BJ (cell line): ENCODE measurements at regions of chr1 and their contacts with region 1.

Region 1: DNA sequence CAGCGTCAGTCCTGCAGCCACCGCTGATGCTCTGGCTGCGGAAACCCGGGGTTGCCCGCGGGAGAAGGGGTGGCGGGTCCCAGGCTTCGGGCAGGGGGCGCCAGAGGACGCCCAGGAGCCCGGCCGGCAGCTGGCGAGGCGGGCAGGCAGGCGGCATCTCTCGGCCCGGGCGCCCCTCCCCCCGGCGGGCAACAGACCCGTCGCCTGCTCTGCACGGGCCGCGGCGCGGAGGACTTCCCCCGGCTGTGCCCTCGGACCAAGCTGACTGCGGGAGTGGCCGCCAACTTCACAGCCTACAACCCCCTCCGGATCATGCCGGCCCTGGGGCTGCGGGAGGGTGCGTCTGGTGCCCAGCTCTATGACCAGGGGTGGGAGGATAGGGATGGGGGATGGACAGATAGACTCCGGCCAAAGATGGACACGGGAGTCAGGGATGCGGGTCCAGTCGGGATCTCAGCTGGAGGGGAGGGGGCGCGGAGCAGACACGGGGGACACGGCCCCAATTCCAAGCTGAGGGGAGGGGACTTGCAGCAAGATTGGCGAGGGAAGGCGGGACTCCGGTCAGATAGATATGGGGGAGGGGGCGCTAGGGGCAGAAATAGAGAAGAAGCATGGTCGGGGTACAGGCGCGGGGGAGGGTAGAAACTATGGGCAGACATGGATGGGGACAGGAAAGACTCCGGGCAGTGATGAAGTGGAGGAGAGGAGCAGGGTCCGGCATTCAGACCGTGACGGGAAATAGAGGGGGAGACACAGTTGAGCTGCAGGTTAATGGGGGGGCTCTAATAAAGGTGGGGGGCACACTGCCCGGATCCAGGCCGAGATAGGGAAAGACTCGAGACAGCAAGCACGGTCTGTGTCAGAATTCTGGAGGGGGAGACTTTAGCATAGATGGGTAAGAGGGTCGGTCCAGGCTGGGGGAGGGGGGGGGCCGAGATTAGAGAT is 1.1 kb downstream of the ADGRB2 start:
- DNase-seq: no peak
- H3K4me3 ChIP-seq: peak overlapping the region; percentile 57
- H3K27me3 ChIP-seq: peaks cover 2% of the 10 kb centered on the region; the same call in 1 of the 2 replicates
- CTCF ChIP-seq: peak; percentile 60

Region 2: GRCh38 chr1:31745096-31745945 is 17.7 kb before region 1 on chr1:
- CTCF ChIA-PET with region 1: interaction called, 19 read pairs
- POLR2A ChIA-PET with region 1: no interaction called
- DNase-seq: no peak
- H3K4me3 ChIP-seq: no peak overlapping the region
- H3K27me3 ChIP-seq: no peaks in the 10 kb centered on the region
- CTCF ChIP-seq: peak; percentile 90